ENCODE measurements at regions of chr18 and their contacts with region 1.

Region 1: DNA sequence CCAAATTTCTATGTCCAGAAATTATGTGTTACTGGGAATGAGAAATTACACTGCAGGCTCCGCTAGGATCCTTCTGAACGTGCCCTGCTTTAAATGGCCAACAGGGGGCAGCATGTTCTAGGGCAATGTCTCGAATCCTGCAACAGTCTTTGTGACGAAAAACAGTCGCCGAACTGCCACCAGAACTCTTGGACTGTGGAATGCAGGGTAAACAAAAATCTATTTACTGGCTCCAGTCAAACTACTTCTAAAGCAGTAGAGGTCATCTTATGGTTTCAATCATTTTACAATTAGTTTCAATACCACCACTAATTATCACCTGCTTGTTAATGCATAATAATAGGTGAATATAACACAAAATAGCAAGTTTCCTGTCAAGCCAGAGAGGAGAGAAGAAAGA is 9.8 kb upstream of the ZNF397 start:
- DNase-seq: peak; percentile 73 to 85
- ATAC-seq: peak; percentile 82 to 99 (median 93)
- H3K4me3 ChIP-seq: peak overlapping the region; percentile 49
- H3K27ac ChIP-seq: no peak overlapping the region
- H3K4me1 ChIP-seq: no peaks in the 10 kb centered on the region
- H3K27me3 ChIP-seq: no peaks in the 10 kb centered on the region
- CTCF ChIP-seq: peak; percentile 95

Region 2: DNA sequence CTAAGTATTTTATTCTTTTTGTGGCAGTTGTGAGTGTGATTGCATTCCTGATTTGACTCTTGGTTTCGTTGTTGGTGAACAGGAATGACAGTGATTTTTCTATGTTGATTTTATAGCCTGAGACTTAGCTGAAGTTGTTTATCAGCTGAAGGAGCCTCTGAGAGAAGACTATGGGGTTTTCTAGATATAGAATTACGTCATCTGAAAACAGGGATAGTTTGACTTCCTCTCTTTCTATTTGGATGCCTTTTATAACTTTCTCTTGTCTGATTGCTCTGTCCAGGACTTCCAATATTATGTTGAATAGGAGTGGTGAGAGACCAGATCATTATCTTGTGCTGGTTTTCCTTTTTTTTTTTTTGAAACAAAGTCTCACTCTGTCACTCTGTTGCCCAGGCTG is 988.3 kb before region 1 on chr18:
- intact Hi-C with region 1: no loop called
- DNase-seq: no peak
- ATAC-seq: no peak
- H3K4me3 ChIP-seq: no peak overlapping the region
- H3K27ac ChIP-seq: no peak overlapping the region
- H3K4me1 ChIP-seq: no peaks in the 10 kb centered on the region
- H3K27me3 ChIP-seq: peaks cover 0 to 3% (median 0%) of the 10 kb centered on the region in 3 donors
- CTCF ChIP-seq: no peak

Region 3: DNA sequence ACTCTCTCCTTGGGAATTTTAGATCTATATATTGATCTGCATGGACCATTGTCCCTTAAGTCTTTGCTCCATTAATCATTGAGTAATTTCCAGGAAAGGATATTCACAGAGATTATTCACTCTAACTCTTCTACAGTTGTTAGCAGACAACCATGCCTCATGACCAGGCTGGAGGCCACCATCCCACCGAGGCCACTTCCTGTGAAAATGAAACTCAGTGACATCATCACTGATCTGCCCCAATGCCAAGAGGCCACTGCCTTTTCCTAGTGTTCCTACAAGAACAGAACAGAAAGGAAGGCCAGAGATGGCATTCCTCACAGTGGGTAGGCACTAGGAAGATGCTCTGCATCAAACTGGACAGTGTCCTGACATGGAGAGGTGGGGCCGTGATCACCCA is 359.6 kb before region 1 on chr18:
- intact Hi-C with region 1: loop called in 1 of 2 experiments (anchors 10 kb)
- DNase-seq: no peak
- ATAC-seq: peak in 1 of 4 donors; percentile 34
- H3K4me3 ChIP-seq: no peak overlapping the region
- H3K27ac ChIP-seq: peak overlapping the region; percentile 25
- H3K4me1 ChIP-seq: no peaks in the 10 kb centered on the region
- H3K27me3 ChIP-seq: no peaks in the 10 kb centered on the region
- CTCF ChIP-seq: no peak

Region 4: GRCh38 chr18:35174093-35174731 is 56.8 kb before region 1 on chr18:
- intact Hi-C with region 1: no loop called
- DNase-seq: no peak
- ATAC-seq: no peak
- H3K4me3 ChIP-seq: no peak overlapping the region
- H3K27ac ChIP-seq: no peak overlapping the region
- H3K4me1 ChIP-seq: peaks cover 3% of the 10 kb centered on the region
- H3K27me3 ChIP-seq: no peaks in the 10 kb centered on the region
- CTCF ChIP-seq: no peak

Region 5: DNA sequence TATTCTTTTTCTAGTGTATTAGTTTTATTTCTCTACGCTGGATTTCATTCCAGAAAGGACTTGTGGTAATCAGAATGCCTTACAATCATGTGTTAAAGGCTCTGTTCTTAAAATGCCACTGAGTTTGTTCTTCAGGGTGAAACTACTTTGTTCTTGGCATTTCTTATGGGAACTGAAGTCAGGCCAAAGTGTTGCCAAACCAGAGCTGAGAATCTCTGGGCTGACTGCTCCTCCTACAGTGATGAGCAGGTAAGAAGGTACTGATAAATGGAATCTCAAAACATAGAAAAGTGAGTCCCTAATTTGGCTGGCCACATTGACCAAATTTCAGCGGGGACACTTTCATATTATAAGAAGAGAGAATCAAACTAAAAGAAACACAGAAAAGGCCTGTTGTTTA is 45.3 kb before region 1 on chr18:
- intact Hi-C with region 1: no loop called
- DNase-seq: no peak
- ATAC-seq: no peak
- H3K4me3 ChIP-seq: no peak overlapping the region
- H3K27ac ChIP-seq: no peak overlapping the region
- H3K4me1 ChIP-seq: no peaks in the 10 kb centered on the region
- H3K27me3 ChIP-seq: no peaks in the 10 kb centered on the region
- CTCF ChIP-seq: no peak

Region 6: DNA sequence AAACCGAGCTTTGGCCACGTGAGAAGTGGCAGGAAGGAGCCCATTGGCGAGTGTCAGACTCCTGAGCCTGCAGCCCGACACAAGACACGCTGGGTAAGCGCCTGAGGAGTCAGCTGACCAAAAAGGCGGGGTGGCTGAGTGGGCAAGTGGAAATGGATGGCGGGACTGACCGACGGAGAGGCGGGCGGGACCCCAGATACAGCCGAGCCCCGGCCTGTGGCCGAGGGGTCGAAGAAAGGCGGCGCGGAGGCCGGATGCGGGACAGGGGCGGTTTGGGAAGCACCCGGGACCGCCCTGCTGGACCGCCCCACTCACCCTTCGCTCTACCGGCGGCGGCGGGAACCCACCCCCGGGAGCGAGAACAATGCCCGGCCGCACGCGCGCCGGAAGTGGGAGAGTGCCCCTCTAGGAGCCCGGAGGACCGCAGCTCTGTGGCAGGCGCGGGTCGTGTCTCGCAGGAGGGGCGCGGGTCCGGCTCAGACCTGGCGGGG is 36.2 kb after region 1 on chr18:
- intact Hi-C with region 1: no loop called
- DNase-seq: peak; percentile 85 to 89
- ATAC-seq: peak; percentile 88 to 95 (median 95)
- H3K4me3 ChIP-seq: peak overlapping the region; percentile 73
- H3K27ac ChIP-seq: peak overlapping the region; percentile 78
- H3K4me1 ChIP-seq: no peaks in the 10 kb centered on the region
- H3K27me3 ChIP-seq: no peaks in the 10 kb centered on the region
- CTCF ChIP-seq: no peak

Measured in psoas muscle (tissue), 8 donors.